Aorta (tissue), 5 donors: ENCODE measurements at regions of chr7 and their contacts with region 1.

Region 1: DNA sequence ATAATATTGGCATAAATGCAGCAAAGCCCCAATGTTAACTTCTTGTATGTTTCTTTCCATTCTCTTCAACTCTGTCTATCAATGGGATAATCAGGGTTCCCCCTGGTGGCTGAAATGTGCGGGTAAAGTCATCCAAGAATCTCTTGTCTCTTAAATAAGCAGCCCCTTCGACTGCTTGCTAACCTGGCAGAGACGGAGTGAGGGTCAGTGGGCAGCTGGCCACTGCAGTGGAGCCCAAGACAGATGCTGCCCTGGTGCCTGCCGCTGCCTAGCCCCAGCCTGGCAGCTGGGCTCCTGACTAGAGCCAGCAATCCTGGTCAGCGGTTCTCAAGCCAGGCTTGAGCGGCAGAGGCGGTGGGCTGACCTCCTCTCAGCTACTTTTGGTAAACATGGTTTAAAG is 248.9 kb downstream of the COBL start:
- DNase-seq: no peak
- ATAC-seq: peak; percentile 40
- H3K4me3 ChIP-seq: no peak overlapping the region
- H3K27ac ChIP-seq: no peak overlapping the region
- H3K4me1 ChIP-seq: no peaks in the 10 kb centered on the region
- H3K27me3 ChIP-seq: no peaks in the 10 kb centered on the region

Region 2: DNA sequence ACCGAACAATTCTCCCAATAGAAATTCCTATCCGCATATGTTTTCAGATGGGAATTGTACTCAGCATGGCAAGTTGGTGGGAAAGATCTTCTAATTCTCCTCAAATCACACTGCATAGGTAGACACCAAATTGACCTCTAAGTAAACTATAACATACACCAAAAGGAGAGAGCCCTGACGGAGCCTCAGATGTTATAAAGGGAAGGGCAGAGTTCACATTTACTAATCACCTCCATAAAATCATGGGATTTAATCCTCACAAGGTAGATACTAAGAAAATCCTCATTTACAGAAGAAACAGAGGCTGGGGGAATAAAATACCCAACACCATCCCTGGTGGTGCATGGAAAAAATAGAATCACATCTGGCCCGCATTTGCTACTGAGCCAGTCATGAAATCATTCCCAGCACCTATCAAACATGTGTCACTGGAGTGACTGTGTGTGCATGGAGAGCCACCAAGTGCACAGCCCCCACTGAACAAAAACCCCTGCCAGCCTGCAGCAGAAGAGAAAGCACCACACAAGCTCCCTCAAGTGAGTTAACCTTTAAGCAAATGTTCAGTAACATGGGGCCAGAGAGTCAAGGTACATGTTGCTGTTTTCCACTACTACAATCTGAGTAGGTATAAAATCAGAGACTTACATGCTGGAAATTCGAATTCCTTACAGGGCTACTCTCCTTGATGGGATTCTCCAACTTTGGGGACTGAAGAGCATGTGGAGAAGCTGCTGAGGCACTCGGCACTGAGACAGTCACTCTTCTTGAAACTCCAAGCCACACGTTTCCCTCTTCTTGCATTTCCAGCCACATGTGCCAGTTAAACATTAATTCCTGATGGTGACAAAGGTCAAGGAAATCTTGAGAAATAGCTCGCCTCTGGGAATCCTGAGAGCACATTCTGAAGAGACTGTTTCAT is 502.9 kb before region 1 on chr7 and contains the start of gene DDC:
- intact Hi-C with region 1: no loop called
- DNase-seq: no peak
- ATAC-seq: no peak
- H3K4me3 ChIP-seq: no peak within 1 kb of the TSS
- H3K27ac ChIP-seq: no peak within 1 kb of the TSS
- H3K4me1 ChIP-seq: no peaks in the 10 kb centered on the region
- H3K27me3 ChIP-seq: no peaks in the 10 kb centered on the region
- total RNA-seq, gene DDC: not detected

Region 3: GRCh38 chr7:50595491-50596102 is 472.2 kb before region 1 on chr7:
- intact Hi-C with region 1: loop called in 1 of 2 experiments (anchors 10 kb)
- DNase-seq: no peak
- ATAC-seq: peak; percentile 65
- H3K4me3 ChIP-seq: no peak overlapping the region
- H3K27ac ChIP-seq: no peak overlapping the region
- H3K4me1 ChIP-seq: no peaks in the 10 kb centered on the region
- H3K27me3 ChIP-seq: no peaks in the 10 kb centered on the region

Region 4: DNA sequence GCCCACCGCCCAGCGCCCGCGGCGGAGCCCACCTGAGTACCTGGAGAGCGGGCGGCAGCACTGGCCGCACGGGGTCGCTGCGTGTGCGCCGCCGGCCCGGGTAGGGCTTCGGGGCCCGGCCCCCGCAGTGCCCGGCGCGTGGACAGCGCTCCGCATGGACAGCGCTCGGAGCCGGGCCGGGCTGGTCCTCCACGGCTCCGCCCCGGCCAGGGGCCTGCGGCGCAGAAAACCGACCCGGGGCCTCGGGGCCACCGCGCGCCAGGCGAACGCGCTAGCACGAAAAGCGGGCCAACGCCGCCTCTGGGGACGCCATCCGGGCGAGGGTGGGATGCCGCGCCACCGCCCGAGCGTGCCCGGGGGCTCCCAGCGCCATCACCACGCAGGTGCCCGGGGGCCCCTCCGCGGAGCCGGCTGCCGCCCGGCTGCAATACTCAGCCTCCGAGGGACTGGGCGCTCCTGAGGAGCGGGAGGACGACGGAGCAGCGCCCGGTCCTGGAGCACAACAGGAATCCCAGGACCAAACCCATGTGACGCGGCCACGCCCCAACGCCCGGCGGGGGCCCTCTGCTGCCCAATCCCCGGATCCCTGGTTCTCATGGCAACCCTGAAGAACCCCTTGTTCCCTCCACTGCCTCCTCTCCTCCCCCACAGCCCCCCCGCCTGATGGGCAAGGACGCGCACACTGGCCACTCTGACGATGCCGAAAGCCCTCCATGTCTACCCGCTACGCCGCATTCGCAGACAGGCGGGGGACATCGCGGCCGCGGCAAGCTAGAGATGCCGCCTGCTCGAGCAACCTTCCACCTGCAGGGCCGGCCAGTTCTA is 285.2 kb before region 1 on chr7 and contains the start of gene GRB10:
- intact Hi-C with region 1: no loop called
- DNase-seq: peak; percentile 56 to 85
- ATAC-seq: peak; percentile 79
- H3K4me3 ChIP-seq: peak within 1 kb of the TSS in 1 of 2 donors; percentile 28
- H3K27ac ChIP-seq: no peak within 1 kb of the TSS
- H3K4me1 ChIP-seq: no peaks in the 10 kb centered on the region
- H3K27me3 ChIP-seq: no peaks in the 10 kb centered on the region
- total RNA-seq, gene GRB10: 106 to 108 TPM

Region 5: GRCh38 chr7:50793115-50793946 is 274.4 kb before region 1 on chr7:
- intact Hi-C with region 1: loop called (anchors 10 kb)
- DNase-seq: peak; percentile 77 to 91
- ATAC-seq: peak; percentile 78
- H3K4me3 ChIP-seq: peak overlapping the region; percentile 97 to 98
- H3K27ac ChIP-seq: peak overlapping the region; percentile 61 to 80
- H3K4me1 ChIP-seq: peaks cover 0 to 7% of the 10 kb centered on the region in 2 donors
- H3K27me3 ChIP-seq: no peaks in the 10 kb centered on the region